IMR-90 (cell line): ENCODE measurements at regions of chr2 and their contacts with region 1.

Region 1: DNA sequence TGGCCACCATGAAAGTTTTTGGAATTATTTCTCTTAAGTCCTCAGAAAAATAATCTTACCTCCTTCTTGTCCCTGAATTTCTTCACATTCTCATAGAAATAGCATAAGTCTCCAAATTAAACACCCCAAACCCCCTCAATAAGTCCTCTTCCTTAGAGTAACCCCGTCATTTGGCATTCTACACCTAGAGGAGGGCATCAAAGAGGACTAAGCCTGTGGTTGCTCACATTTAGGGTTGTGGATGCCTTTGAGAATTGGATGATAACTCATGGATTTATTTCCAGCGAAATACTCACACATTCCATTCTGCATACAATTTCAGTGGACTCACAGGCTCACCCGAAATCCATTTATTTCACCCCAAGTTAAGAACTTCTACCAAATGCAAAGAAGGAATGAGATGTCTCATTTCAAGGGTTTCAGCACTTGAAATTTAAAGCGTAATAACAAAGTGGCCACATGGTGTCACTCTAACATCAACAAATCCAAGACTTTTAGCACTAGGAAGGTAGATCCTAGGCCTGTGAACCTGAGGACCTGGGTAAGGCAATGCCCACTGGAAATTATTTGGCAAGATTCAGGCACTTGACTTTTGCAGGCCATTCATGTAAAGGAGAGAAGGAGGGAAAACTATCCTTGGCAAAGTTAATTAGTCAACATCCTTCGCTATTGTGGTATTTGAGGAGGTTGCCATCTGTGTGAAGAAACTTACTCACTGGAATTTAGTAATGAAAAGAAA is 24.6 kb downstream of the DYTN start:
- DNase-seq: peak; percentile 69
- ATAC-seq: peak; percentile 83
- H3K4me3 ChIP-seq: no peak overlapping the region
- H3K27ac ChIP-seq: no peak overlapping the region
- H3K4me1 ChIP-seq: no peaks in the 10 kb centered on the region
- H3K27me3 ChIP-seq: peaks cover under 1% of the 10 kb centered on the region
- CTCF ChIP-seq: peak; percentile 69
- POLR2A ChIP-seq: no peak
- RAD21 ChIP-seq: peak; percentile 79

Region 2: GRCh38 chr2:206392118-206392517 is 301.4 kb before region 1 on chr2:
- CTCF ChIA-PET with region 1: no interaction called
- POLR2A ChIA-PET with region 1: no interaction called
- dilution Hi-C with region 1: no loop called
- in situ Hi-C with region 1: no loop called
- intact Hi-C with region 1: loop called (anchors 5 kb)
- DNase-seq: peak; percentile 54
- ATAC-seq: peak; percentile 97
- H3K4me3 ChIP-seq: no peak overlapping the region
- H3K27ac ChIP-seq: no peak overlapping the region
- H3K4me1 ChIP-seq: no peaks in the 10 kb centered on the region
- H3K27me3 ChIP-seq: no peaks in the 10 kb centered on the region
- CTCF ChIP-seq: peak; percentile 67
- POLR2A ChIP-seq: no peak
- RAD21 ChIP-seq: peak; percentile 69

Region 3: GRCh38 chr2:206585335-206585734 is 108.2 kb before region 1 on chr2:
- CTCF ChIA-PET with region 1: no interaction called
- POLR2A ChIA-PET with region 1: no interaction called
- dilution Hi-C with region 1: no loop called
- in situ Hi-C with region 1: no loop called
- intact Hi-C with region 1: no loop called
- DNase-seq: peak; percentile 42
- ATAC-seq: peak; percentile 29; the same call in 1 of the 2 replicates
- H3K4me3 ChIP-seq: no peak overlapping the region
- H3K27ac ChIP-seq: no peak overlapping the region
- H3K4me1 ChIP-seq: no peaks in the 10 kb centered on the region
- H3K27me3 ChIP-seq: no peaks in the 10 kb centered on the region
- CTCF ChIP-seq: no peak
- POLR2A ChIP-seq: no peak
- RAD21 ChIP-seq: no peak

Region 4: DNA sequence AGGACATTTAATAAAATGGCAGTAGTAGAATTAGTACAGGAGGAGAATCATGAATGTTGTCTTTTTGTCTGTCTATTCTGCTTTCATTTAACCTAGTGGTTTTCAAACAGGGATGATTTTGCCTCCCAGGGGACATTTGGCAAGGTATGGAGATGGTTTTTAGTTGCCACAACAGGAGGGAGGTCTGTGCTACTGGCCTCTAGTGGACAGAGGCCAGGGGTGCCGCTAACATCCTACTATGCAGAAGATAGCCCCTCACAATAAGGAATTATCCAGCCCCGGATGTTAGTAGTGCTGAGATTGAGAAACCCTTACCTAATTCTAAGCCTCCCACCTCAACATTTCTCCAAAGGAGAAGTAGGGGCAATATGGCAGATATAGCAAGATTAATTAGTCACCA is 90.2 kb after region 1 on chr2:
- CTCF ChIA-PET with region 1: interaction called, 5 read pairs
- POLR2A ChIA-PET with region 1: interaction called, 6 read pairs
- dilution Hi-C with region 1: no loop called
- in situ Hi-C with region 1: loop called (anchors 5 kb)
- intact Hi-C with region 1: loop called (anchors 1 kb)
- DNase-seq: no peak
- ATAC-seq: peak; percentile 69
- H3K4me3 ChIP-seq: no peak overlapping the region
- H3K27ac ChIP-seq: no peak overlapping the region
- H3K4me1 ChIP-seq: no peaks in the 10 kb centered on the region
- H3K27me3 ChIP-seq: no peaks in the 10 kb centered on the region
- CTCF ChIP-seq: peak; percentile 36
- POLR2A ChIP-seq: no peak
- RAD21 ChIP-seq: no peak

Region 5: DNA sequence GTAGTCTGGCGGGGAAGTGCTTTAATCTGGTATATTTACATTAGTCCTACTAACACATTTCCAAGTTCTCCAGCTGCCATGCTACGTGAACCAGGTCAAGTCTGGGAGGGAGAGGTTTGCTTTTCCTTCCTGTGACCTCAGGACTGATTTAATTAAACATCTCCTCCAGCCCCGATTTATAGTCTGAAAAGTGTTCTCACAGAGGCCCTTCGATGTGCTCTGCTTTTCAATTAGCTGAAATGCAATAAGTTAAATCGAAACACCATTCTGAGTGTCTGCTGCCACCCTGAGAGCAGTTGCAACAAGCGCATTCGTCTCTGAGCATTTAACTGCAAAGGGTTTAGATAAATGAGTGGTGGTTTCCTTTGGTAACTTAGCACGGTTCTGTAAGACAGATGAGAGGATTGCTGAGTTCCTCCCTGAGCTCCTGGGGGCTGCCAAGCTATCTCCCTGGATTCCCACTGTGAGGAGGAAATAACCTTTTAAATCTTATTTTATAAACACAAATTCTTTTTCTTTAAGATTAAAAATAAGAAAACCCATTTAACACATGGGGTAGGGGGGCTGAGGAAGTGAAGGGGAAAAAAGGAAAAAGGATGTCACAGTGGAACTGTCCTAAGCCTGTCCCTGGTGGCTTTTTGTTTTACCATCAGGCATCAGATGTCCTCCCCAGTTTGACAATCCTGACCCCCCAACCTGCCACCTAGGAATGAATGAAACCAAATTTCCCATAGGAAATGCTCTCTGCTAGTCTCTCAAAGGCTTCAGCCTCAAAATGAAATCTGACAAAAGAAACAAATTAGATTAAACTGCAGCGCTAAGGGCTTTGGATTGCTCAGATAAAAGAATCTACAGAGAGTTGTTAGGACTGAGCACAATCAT is 779.7 kb after region 1 on chr2:
- CTCF ChIA-PET with region 1: no interaction called
- POLR2A ChIA-PET with region 1: no interaction called
- dilution Hi-C with region 1: no loop called
- in situ Hi-C with region 1: loop called (anchors 10 kb)
- intact Hi-C with region 1: loop called (anchors 1 kb)
- DNase-seq: peak; percentile 88
- ATAC-seq: peak; percentile 83
- H3K4me3 ChIP-seq: peak overlapping the region; percentile 14; the same call in 1 of the 2 replicates
- H3K27ac ChIP-seq: peak overlapping the region; percentile 62
- H3K4me1 ChIP-seq: peaks cover 7% of the 10 kb centered on the region
- H3K27me3 ChIP-seq: no peaks in the 10 kb centered on the region
- CTCF ChIP-seq: peak; percentile 92
- POLR2A ChIP-seq: no peak
- RAD21 ChIP-seq: peak; percentile 98

Region 6: DNA sequence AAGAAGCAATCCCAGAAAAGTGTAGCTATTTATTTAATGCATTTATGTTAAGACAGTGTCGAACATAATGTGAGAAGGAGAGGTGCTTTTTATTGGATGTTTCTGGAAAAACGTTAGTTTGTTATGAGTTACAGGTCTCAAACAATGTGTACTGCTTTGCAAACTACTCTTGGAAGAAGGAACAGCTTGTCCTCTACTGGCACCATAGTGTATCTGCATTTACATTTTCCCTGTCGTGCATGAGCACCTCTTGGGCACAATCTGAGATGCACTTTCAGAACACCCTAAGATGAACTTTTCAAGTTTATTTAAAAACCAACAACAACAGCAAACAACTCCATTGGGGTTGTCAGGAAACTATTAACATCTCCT is 1040.7 kb after region 1 on chr2:
- CTCF ChIA-PET with region 1: no interaction called
- POLR2A ChIA-PET with region 1: no interaction called
- dilution Hi-C with region 1: no loop called
- in situ Hi-C with region 1: no loop called
- intact Hi-C with region 1: loop called (anchors 10 kb)
- DNase-seq: peak; percentile 61
- ATAC-seq: peak; percentile 88
- H3K4me3 ChIP-seq: no peak overlapping the region
- H3K27ac ChIP-seq: no peak overlapping the region
- H3K4me1 ChIP-seq: no peaks in the 10 kb centered on the region
- H3K27me3 ChIP-seq: no peaks in the 10 kb centered on the region
- CTCF ChIP-seq: peak; percentile 53
- POLR2A ChIP-seq: no peak
- RAD21 ChIP-seq: peak; percentile 61